ENCODE measurements at regions of chr1 and their contacts with region 1.

Region 1: DNA sequence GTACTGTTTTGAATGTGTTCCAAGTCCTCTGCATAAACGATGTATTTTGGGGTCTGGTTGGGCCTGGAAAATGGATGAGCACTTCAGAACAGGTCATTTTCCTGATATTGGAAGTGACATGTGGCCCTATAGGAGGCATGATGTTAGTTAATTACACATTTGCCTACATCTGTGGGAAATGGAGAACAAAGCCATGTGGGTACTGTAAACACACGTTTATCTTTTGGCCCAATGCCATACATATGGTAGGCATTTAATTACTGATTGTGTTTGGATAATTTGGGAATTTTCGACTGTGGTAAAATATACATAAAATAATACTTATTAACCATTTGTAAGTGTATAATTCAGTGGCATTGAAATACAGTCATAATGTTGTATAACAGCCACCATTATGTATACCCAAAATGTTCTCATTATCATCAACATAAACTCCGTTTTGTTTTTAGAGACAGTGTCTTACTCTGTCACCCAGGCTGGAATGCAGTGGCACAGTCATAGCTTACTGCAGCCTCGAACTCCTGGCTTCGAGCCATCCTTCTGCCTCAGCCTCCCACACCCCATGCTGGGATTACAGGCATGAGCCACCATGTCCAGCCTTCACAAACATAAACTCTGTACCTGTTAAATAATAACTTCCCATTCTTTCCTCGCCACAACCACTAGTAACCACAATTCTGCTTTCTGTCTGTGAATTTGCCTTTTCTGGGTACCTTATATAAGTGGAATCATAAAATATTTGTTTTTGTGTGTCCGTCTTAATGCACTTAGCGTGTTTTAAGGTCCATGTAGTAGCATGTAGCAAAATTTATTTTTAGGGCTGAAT is 11.9 kb upstream of the RNPEP start:
- DNase-seq: no peak
- H3K4me3 ChIP-seq: no peak overlapping the region
- H3K4me3 Mint-ChIP-seq: no peak overlapping the region
- H3K27ac ChIP-seq: no peak overlapping the region
- H3K27ac Mint-ChIP-seq: peak overlapping the region in 1 of 7 donors; percentile 29
- H3K4me1 ChIP-seq: no peaks in the 10 kb centered on the region
- H3K4me1 Mint-ChIP-seq: peaks cover 0 to 1% (median 0%) of the 10 kb centered on the region in 4 donors
- H3K27me3 ChIP-seq: no peaks in the 10 kb centered on the region
- H3K27me3 Mint-ChIP-seq: peaks cover 0 to 1% of the 10 kb centered on the region in 2 donors

Region 2: DNA sequence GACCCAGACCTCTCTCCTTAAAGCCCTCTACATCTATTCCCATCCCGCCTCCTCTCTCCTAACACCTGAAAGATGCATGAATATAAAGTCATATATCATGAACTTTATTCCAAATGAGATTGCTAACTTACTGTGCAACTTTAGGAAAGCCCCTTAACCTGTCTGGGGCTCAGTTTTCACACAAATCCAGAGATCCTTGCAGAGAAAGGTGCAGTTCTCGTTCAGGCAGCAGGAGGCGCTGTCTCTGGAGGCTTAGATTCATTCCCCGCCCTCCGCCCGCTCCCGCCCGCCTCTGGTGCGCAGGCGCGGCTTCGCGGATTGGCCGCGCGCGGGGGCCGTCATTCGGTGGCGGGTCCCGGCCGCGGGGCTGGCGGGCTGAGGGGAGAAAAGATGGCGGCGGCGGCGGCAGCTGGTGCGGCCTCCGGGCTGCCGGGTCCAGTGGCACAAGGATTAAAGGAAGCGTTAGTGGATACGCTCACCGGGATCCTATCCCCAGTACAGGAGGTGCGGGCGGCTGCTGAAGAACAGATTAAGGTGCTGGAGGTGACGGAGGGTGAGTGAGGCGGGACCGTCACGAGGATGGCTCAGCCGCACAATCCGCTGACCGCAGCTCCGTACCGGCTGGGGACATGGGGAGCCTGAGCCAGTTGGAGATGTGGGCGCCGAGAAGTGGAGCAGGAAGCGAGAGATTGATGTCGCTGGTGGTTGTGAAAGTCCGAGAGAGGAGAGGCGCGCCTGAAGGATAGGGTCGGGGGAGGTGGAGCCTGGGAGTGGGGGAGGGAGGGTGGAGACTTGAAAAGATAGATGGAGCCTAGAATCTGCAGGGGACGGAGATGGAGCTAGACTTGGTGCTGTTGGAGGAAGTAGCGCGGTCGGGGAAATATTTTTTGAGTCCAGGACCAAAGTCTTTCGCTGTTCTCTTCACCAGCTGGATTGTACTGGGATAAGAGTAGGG is 141.4 kb before region 1 on chr1 and contains the start of gene IPO9:
- CTCF ChIA-PET with region 1: interaction called, 5 read pairs
- POLR2A ChIA-PET with region 1: no interaction called
- intact Hi-C with region 1: loop called (anchors 1 kb)
- DNase-seq: peak; percentile 92 to 96 (median 94)
- H3K4me3 ChIP-seq: peak within 1 kb of the TSS; percentile 59 to 99
- H3K4me3 Mint-ChIP-seq: peak within 1 kb of the TSS; percentile 93 to 99 (median 97)
- H3K27ac ChIP-seq: peak within 1 kb of the TSS; percentile 81
- H3K27ac Mint-ChIP-seq: peak within 1 kb of the TSS; percentile 82 to 99 (median 96)
- H3K4me1 ChIP-seq: peaks cover 44% of the 10 kb centered on the region
- H3K4me1 Mint-ChIP-seq: peaks cover 30 to 51% (median 38%) of the 10 kb centered on the region in 4 donors
- H3K27me3 ChIP-seq: no peaks in the 10 kb centered on the region
- H3K27me3 Mint-ChIP-seq: no peaks in the 10 kb centered on the region
- total RNA-seq, gene IPO9: 41.2 to 42.7 TPM

Region 3: DNA sequence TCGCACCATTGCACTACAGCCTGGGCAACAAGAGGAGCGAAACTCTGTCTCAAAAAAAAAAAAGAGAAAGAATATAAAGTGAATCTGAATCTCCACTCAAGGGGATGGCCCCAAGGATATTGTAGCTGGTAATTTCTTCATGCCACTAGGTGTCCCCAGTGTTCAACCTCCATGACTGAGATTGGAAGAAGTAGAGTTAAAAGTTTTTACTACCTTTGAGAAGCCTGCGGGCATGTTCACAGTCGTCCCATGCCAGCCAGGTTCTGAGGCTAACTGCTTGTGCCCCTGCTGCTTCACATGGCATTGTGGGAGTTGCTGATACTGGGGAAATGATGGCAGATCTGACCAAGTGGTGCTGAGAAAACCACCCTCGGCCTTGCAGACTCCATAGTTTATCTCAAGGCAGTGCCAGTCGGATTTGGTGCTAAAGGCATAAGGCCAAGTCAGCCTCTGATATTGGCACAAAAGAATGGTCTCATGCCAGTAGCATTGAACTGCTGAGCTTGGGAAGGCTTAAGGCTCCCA is 92.6 kb before region 1 on chr1:
- CTCF ChIA-PET with region 1: interaction called, 10 read pairs
- POLR2A ChIA-PET with region 1: no interaction called
- intact Hi-C with region 1: loop called (anchors 1 kb)
- DNase-seq: peak in 3 of 5 donors; percentile 7 to 22 (median 12)
- H3K4me3 ChIP-seq: no peak overlapping the region
- H3K4me3 Mint-ChIP-seq: no peak overlapping the region
- H3K27ac ChIP-seq: no peak overlapping the region
- H3K27ac Mint-ChIP-seq: peak overlapping the region in 1 of 7 donors; percentile 32
- H3K4me1 ChIP-seq: no peaks in the 10 kb centered on the region
- H3K4me1 Mint-ChIP-seq: peaks cover 0 to 4% (median 0%) of the 10 kb centered on the region in 4 donors
- H3K27me3 ChIP-seq: no peaks in the 10 kb centered on the region
- H3K27me3 Mint-ChIP-seq: no peaks in the 10 kb centered on the region

Region 4: GRCh38 chr1:201982623-201983379 is 12.3 kb after region 1 on chr1 and contains the start of gene RNPEP:
- CTCF ChIA-PET with region 1: interaction called, 10 read pairs
- POLR2A ChIA-PET with region 1: interaction called, 7 read pairs
- intact Hi-C with region 1: no loop called
- DNase-seq: peak; percentile 50 to 71 (median 60)
- H3K4me3 ChIP-seq: peak within 1 kb of the TSS; percentile 52 to 77
- H3K4me3 Mint-ChIP-seq: peak within 1 kb of the TSS; percentile 92 to 100 (median 98)
- H3K27ac ChIP-seq: peak within 1 kb of the TSS; percentile 63
- H3K27ac Mint-ChIP-seq: peak within 1 kb of the TSS; percentile 81 to 98 (median 94)
- H3K4me1 ChIP-seq: peaks cover 17% of the 10 kb centered on the region
- H3K4me1 Mint-ChIP-seq: peaks cover 18 to 25% (median 22%) of the 10 kb centered on the region in 4 donors
- H3K27me3 ChIP-seq: no peaks in the 10 kb centered on the region
- H3K27me3 Mint-ChIP-seq: no peaks in the 10 kb centered on the region
- total RNA-seq, gene RNPEP: 25.9 to 29.1 TPM

Region 5: GRCh38 chr1:201999625-202000238 is 29.2 kb after region 1 on chr1:
- CTCF ChIA-PET with region 1: interaction called, 12 read pairs
- POLR2A ChIA-PET with region 1: no interaction called
- intact Hi-C with region 1: no loop called
- DNase-seq: peak in 4 of 5 donors; percentile 18 to 24 (median 22)
- H3K4me3 ChIP-seq: no peak overlapping the region
- H3K4me3 Mint-ChIP-seq: no peak overlapping the region
- H3K27ac ChIP-seq: no peak overlapping the region
- H3K27ac Mint-ChIP-seq: no peak overlapping the region
- H3K4me1 ChIP-seq: no peaks in the 10 kb centered on the region
- H3K4me1 Mint-ChIP-seq: no peaks in the 10 kb centered on the region
- H3K27me3 ChIP-seq: no peaks in the 10 kb centered on the region
- H3K27me3 Mint-ChIP-seq: no peaks in the 10 kb centered on the region